Gastrocnemius medialis (tissue), 4 donors: ENCODE measurements at regions of chr5 and their contacts with region 1.

Region 1: GRCh38 chr5:151239237-151239861 is 13.6 kb upstream of the GM2A start:
- DNase-seq: peak; percentile 34 to 60
- ATAC-seq: peak; percentile 34 to 45
- H3K4me3 ChIP-seq: peak overlapping the region; percentile 49 to 57 (median 55)
- H3K27ac ChIP-seq: peak overlapping the region; percentile 88 to 93 (median 91)
- H3K4me1 ChIP-seq: peaks cover 28% of the 10 kb centered on the region in 2 donors
- H3K27me3 ChIP-seq: no peaks in the 10 kb centered on the region
- CTCF ChIP-seq: peak; percentile 73 to 92 (median 79)
- POLR2A ChIP-seq: no peak

Region 2: GRCh38 chr5:151037561-151038411 is 201.6 kb before region 1 on chr5:
- in situ Hi-C with region 1: no loop called
- intact Hi-C with region 1: loop called (anchors 5 kb)
- DNase-seq: peak; percentile 81 to 84
- ATAC-seq: peak; percentile 41 to 54
- H3K4me3 ChIP-seq: no peak overlapping the region
- H3K27ac ChIP-seq: peak overlapping the region; percentile 88 to 98 (median 95)
- H3K4me1 ChIP-seq: peaks cover 48 to 54% of the 10 kb centered on the region in 2 donors
- H3K27me3 ChIP-seq: no peaks in the 10 kb centered on the region
- CTCF ChIP-seq: no peak
- POLR2A ChIP-seq: peak in 1 of 2 donors; percentile 41

Region 3: GRCh38 chr5:151080623-151081430 is 158.5 kb before region 1 on chr5 and contains the start of gene TNIP1:
- in situ Hi-C with region 1: no loop called
- intact Hi-C with region 1: no loop called
- DNase-seq: peak; percentile 90 to 94
- ATAC-seq: peak; percentile 73 to 80
- H3K4me3 ChIP-seq: peak within 1 kb of the TSS; percentile 87 to 97 (median 92)
- H3K27ac ChIP-seq: peak within 1 kb of the TSS; percentile 98 to 100 (median 100)
- H3K4me1 ChIP-seq: peaks cover 72 to 79% of the 10 kb centered on the region in 2 donors
- H3K27me3 ChIP-seq: no peaks in the 10 kb centered on the region
- CTCF ChIP-seq: no peak
- POLR2A ChIP-seq: peak; percentile 83 to 93
- total RNA-seq, gene TNIP1: 112 to 228 (median 188) TPM

Region 4: DNA sequence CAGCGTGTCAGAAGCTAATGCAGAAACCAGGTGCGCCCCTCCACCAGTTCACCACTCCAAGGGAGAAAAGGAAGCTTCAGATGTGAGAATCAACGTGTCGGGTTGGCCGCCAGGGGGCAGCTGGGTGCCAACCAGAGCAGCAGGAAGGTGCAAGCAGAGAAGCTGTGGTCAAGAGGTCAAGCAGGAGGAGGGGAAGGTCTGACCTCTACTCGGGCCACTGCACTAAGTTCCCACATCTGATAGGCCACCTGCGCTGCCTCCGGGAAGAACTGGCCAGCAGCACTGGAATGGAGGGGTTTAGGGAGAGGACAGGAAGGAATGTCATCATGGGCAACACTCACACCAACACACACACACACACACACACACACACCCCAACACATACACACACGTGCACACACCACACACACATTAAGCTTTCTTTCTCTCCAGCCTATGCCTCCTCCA is 113.1 kb before region 1 on chr5:
- in situ Hi-C with region 1: loop called (anchors 5 to 25 kb)
- intact Hi-C with region 1: loop called (anchors 1 kb)
- DNase-seq: peak; percentile 61 to 86
- ATAC-seq: peak; percentile 34 to 52
- H3K4me3 ChIP-seq: no peak overlapping the region
- H3K27ac ChIP-seq: peak overlapping the region; percentile 82 to 91 (median 88)
- H3K4me1 ChIP-seq: peaks cover 30 to 48% of the 10 kb centered on the region in 2 donors
- H3K27me3 ChIP-seq: no peaks in the 10 kb centered on the region
- CTCF ChIP-seq: peak; percentile 89 to 96 (median 91)
- POLR2A ChIP-seq: no peak

Region 5: DNA sequence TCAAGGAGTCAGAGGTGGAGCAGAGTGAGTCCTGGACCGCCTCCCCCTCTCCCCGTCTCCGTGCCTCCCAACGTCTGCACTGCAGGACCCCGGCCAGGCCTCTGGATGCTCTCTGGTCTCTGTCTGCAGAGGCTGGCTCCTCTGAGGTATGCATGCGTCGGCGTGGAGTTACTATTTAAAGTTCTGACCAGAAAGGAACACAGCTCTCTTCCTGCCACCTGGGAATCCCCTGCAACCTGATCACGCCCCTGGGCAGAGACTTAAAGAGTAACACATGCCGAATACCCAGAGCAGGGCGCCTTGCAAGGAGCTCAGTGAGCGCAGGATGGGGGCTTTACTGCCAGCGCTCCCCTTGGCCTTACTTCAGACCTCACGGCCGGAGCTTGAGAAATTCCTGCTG is 97.8 kb before region 1 on chr5:
- in situ Hi-C with region 1: loop called in 1 of 4 experiments (anchors 25 kb)
- intact Hi-C with region 1: loop called (anchors 1 kb)
- DNase-seq: peak; percentile 73 to 89
- ATAC-seq: peak; percentile 94
- H3K4me3 ChIP-seq: peak overlapping the region in 2 of 4 donors; percentile 9 to 26
- H3K27ac ChIP-seq: peak overlapping the region; percentile 73 to 84 (median 79)
- H3K4me1 ChIP-seq: peaks cover 50 to 63% of the 10 kb centered on the region in 2 donors
- H3K27me3 ChIP-seq: no peaks in the 10 kb centered on the region
- CTCF ChIP-seq: no peak
- POLR2A ChIP-seq: peak; percentile 49 to 54

Region 6: DNA sequence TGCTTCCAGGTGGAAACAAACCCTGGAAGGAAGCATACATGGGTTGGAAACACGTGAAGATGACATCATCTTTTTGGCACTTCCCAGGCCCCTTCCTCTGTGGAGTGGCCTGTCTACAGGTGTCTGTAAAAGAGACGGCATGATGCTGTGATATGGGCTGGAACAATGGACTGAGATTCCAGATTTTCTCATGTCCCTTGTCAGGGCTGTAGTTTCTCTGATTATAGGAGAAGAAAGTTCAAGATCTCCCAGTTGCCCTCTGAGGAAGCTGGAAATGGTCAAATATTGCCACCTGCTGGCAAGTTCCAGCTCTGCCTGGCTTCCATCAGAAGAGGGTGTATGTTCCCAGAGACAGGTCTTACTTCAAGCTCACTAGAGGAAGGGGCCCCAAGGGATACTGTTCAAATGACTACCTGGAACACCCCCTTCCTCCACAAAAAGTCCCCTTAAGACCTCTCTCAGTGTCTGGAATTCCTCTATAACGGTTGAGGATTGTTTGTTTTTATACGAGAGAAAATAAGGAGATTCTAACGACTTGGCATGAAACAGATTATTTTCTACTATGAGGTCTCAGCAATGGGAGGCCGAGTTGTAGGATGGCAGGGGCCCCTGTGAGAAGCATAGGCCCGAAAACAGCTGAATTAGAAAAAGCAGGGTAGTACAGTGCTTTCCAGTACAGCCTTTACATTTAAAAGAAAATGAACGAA is 74.5 kb before region 1 on chr5:
- in situ Hi-C with region 1: no loop called
- intact Hi-C with region 1: loop called (anchors 2 kb)
- DNase-seq: peak; percentile 65 to 83
- ATAC-seq: peak; percentile 91 to 94
- H3K4me3 ChIP-seq: no peak overlapping the region
- H3K27ac ChIP-seq: peak overlapping the region in 3 of 4 donors; percentile 29 to 41 (median 34)
- H3K4me1 ChIP-seq: peaks cover 12 to 21% of the 10 kb centered on the region in 2 donors
- H3K27me3 ChIP-seq: no peaks in the 10 kb centered on the region
- CTCF ChIP-seq: peak; percentile 79 to 92 (median 91)
- POLR2A ChIP-seq: no peak

Region 7: DNA sequence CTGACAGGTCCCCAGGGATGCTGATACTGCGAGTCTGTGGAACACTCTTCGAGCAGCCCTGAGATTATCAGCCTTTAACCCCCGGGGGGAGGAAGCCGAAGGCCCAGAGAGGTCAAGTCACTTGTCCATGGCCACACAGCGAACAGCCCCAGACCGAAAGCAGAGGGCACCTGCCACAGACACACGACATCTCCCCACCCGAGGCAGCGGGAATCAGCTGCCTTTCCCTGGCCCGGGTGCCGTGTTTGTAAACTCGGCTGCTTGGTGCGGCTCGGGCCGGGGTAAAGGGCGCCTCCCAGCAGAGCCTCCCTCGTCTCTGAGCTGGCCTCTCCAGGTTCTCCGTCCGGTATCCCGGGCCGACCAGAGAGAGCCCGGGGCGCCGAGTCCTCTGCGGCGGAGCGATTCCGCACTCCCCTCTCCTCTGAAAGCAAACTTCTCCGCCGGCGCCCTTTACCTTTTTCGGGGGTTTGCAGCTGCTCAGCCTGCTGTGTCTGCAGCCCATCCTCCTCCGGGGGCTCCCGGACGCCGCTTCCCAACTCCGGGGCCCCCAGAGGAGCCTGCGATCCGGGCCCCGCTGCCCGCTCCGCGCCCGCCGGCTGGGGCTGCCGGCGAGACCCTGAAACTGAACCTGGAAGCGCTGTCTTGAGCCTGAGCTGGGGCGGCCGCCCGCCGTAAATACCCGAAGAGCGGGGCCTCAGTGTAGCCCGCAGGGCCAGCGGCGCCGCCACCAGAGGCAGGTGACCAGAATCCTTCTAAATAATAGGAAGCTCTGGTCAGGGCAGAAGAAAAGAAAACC is 15.7 kb before region 1 on chr5 and contains the start of gene CCDC69:
- in situ Hi-C with region 1: no loop called
- intact Hi-C with region 1: loop called (anchors 2 kb)
- DNase-seq: peak; percentile 66 to 84
- ATAC-seq: peak; percentile 63 to 67
- H3K4me3 ChIP-seq: peak within 1 kb of the TSS; percentile 81 to 92 (median 88)
- H3K27ac ChIP-seq: peak within 1 kb of the TSS; percentile 94 to 97 (median 95)
- H3K4me1 ChIP-seq: peaks cover 44 to 47% of the 10 kb centered on the region in 2 donors
- H3K27me3 ChIP-seq: no peaks in the 10 kb centered on the region
- CTCF ChIP-seq: peak in 4 of 5 experiments; percentile 16 to 50 (median 38)
- POLR2A ChIP-seq: peak; percentile 95 to 99
- total RNA-seq, gene CCDC69: 93.4 to 128 (median 114) TPM